Activated CD8-positive, alpha-beta memory T cell treated with anti-CD3 and anti-CD28 coated beads, Interleukin-2, amount 10 ng/mL, durations not matched to agents 7 days and 5 days (primary cell): ENCODE measurements at regions of chr18 and their contacts with region 1.

Region 1: DNA sequence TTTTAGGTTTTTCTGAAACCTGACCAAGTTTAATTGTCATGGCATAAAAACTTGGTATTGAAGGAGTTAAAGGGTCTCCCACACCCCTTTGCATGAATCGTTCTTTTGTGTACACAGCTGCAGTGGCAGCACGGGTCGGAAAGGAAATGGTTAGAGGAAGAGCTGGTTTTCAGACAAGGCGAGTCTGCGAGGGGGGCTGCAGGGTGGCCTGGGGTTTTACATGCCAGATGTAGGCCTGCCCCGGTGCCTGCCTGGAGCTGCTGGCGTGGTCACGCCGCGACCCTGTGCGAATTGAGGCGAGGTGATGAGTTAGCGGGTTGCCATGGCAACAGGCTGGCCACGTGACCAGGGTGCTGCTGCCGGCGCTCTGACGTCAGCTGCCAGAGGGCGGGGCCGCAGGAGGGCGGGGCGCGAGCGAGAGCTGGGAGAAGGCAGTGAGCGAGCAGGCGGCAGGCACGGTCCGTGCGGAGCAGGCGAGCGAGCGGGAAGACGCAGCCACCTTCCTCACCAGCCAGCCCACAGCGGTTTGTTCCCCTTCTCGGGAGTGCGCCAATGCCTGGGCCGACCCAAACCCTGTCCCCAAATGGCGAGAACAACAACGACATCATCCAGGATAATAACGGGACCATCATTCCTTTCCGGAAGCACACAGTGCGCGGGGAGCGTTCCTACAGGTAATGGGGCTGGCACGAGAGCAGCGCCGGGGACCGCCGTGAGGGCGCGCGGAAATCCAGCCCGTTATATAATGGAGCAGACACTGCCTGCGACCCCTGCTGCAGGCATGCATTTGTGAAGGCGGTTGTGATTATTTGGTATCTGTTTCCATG is at the start of gene MAPRE2:
- DNase-seq: peak; percentile 99
- ATAC-seq: peak; percentile 83
- H3K4me3 Mint-ChIP-seq: peak within 1 kb of the TSS; percentile 96
- H3K27ac Mint-ChIP-seq: peak within 1 kb of the TSS; percentile 99
- H3K4me1 Mint-ChIP-seq: peaks cover 55% of the 10 kb centered on the region
- H3K27me3 Mint-ChIP-seq: no peaks in the 10 kb centered on the region
- total RNA-seq, gene MAPRE2: 40.2 to 49.0 TPM

Region 2: GRCh38 chr18:35029770-35030169 is 11.4 kb before region 1 on chr18:
- CTCF ChIA-PET with region 1: interaction called, 41 read pairs
- DNase-seq: no peak
- ATAC-seq: peak; percentile 89
- H3K4me3 Mint-ChIP-seq: peak overlapping the region; percentile 79
- H3K27ac Mint-ChIP-seq: peak overlapping the region; percentile 100
- H3K4me1 Mint-ChIP-seq: peaks cover 28% of the 10 kb centered on the region
- H3K27me3 Mint-ChIP-seq: no peaks in the 10 kb centered on the region

Region 3: DNA sequence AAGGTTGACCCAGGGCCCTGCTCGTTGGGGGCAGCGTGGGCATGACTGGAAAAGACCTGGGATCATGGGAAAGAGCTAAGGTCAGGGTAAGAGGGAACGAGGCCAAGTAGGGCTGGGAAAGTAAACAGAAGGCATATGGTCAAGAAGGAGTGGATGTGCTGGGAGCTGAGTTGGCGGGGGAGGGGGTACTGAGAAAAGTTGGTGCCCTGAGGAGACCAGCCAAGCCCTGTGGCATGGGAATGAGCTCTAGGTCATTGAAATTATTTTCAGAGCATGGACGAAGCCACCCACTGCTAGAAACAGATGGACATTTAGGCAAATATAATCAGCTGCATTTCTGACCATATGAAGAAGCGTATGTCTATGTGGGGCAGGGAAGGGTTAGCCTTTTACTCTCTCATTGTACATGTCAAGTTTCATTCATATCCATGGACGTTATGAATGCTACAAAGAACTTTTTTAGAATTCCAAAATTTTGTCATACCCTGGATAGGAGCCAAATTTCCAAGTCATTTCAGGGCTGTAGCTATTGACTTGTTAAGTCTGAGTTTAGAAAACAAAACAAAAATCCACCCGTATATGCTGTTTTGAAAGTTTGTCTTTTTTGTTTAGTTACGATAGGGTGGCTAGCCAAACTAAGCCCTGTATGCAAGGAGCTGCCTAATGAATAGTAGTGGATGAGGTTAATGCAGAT is 19.1 kb after region 1 on chr18:
- CTCF ChIA-PET with region 1: no interaction called
- DNase-seq: no peak
- ATAC-seq: no peak
- H3K4me3 Mint-ChIP-seq: no peak overlapping the region
- H3K27ac Mint-ChIP-seq: no peak overlapping the region
- H3K4me1 Mint-ChIP-seq: no peaks in the 10 kb centered on the region
- H3K27me3 Mint-ChIP-seq: no peaks in the 10 kb centered on the region